Activated T-helper 1 cell treated with anti-CD3 and anti-CD28 coated beads, Interleukin-12 subunit alpha, Interleukin-12 subunit beta, Interleukin-2, Interleukin-4 antibody, amounts not matched to agents 30 ng/mL and 10 ng/mL and 1 ng/mL, durations not matched to agents 14 hours and 24 hours and 36 hours (primary cell): ENCODE measurements at regions of chr1 and their contacts with region 1.

Region 1: DNA sequence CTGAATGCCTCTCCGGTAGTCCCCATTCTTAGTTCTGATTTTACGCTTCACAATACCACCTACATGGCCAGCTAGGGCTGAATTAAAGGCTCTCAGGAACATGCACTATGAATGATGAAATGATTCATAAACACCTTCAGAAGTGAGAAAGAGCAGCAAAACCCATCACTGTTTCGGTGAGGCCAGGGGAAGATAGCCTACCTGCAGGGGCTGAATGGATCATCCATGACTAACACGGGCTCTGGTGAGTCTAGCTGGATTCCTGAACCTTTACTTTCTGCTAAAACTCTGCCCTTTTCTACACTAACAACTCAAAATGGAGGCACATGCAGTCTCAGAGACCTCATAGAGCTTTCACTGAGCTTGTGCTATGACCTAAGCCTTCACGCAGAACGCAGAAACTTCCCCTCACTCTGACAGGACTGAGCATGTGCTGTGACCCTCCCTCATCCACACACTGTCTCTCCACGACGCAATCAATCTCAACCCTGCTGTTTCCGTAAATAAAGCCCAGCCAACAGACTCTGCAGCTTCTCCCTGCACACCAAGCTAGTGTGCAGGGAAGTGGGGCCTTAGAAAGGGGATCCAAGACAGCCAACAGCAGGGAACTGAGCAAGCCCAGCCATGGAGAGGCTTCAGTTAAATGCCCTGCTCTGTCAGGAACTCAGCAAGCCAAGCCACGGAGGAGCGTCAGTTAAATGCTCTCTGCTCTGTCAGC is 207.8 kb downstream of the SLC45A1 start:
- DNase-seq: peak; percentile 69
- H3K4me3 Mint-ChIP-seq: no peak overlapping the region
- H3K27ac Mint-ChIP-seq: no peak overlapping the region
- H3K4me1 Mint-ChIP-seq: peaks cover 20% of the 10 kb centered on the region
- H3K27me3 Mint-ChIP-seq: no peaks in the 10 kb centered on the region

Region 2: DNA sequence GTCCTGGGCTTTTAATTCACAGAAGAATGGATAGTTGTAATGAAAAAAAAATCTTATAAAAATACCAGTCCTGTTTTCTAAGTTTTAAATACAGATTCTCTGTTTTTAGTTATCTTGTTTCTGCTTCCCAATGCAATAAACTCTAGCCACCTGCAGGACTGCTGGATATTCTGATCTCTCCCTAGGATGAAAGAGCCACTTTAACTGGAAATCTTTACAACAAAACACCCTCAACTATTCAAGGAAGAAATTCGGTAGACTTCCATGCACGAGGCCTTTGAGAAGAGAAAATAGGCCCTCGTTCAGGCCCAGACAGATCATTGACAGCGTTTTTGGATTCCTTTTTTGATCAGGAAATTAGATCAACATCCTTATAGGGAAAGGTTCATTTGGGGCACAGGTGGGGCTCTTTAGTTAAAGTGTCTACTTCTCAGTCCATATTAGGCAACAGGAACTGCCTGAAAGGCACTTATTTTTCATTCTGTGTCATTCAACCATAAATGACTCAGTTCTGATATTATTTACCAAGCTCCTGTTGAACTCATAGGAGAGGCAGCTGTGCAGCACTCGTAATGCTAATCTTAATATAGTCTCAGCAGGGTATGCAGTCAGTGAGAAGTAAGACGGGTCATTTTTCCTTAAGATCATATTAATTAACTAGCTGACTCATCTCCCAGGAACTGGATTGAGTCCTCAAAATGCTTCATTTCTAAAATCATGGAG is 428.5 kb before region 1 on chr1:
- intact Hi-C with region 1: loop called (anchors 10 kb)
- DNase-seq: peak; percentile 11
- H3K4me3 Mint-ChIP-seq: peak overlapping the region; percentile 63
- H3K27ac Mint-ChIP-seq: peak overlapping the region; percentile 69
- H3K4me1 Mint-ChIP-seq: peaks cover 37% of the 10 kb centered on the region
- H3K27me3 Mint-ChIP-seq: peaks cover 5% of the 10 kb centered on the region

Region 3: GRCh38 chr1:8423650-8424538 is 101.8 kb before region 1 on chr1:
- intact Hi-C with region 1: loop called (anchors 1 kb)
- DNase-seq: peak; percentile 32
- H3K4me3 Mint-ChIP-seq: peak overlapping the region; percentile 91
- H3K27ac Mint-ChIP-seq: peak overlapping the region; percentile 92
- H3K4me1 Mint-ChIP-seq: peaks cover 44% of the 10 kb centered on the region
- H3K27me3 Mint-ChIP-seq: no peaks in the 10 kb centered on the region

Region 4: GRCh38 chr1:8497210-8497801 is 28.4 kb before region 1 on chr1:
- intact Hi-C with region 1: loop called (anchors 1 kb)
- DNase-seq: no peak
- H3K4me3 Mint-ChIP-seq: no peak overlapping the region
- H3K27ac Mint-ChIP-seq: peak overlapping the region; percentile 67
- H3K4me1 Mint-ChIP-seq: peaks cover 34% of the 10 kb centered on the region
- H3K27me3 Mint-ChIP-seq: no peaks in the 10 kb centered on the region

Region 5: DNA sequence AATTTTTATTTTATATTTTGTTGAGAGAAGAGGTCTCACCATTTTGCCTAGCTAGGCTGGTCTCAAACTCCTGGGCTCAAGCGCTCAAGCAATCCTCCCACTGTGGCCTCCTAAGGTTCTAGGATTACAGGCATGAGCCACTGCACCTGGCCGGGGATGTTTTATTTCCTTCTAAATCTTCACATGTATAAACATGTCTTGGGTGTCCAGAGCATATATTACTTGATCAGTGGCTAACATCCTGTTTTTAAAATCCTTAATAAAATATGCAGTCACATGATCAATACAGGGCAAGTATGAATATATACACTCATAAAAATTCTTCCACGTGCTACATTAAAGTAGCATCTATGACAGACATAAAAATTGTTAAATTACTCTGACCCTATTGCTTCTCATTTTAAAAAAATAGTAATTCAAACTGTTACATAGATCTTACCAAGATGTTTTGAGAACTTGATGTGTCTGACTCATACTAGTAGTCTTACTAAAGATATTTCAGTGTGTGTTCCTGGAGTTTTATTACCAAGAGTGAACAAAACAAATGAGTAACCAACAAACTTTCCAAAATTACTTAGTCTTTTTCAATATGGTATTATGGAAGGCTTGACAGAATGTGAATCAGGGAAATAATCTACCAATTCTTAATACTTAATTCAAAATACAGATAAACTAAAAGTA is 14.7 kb after region 1 on chr1:
- intact Hi-C with region 1: loop called (anchors 1 kb)
- DNase-seq: no peak
- H3K4me3 Mint-ChIP-seq: peak overlapping the region; percentile 65
- H3K27ac Mint-ChIP-seq: peak overlapping the region; percentile 91
- H3K4me1 Mint-ChIP-seq: peaks cover 51% of the 10 kb centered on the region
- H3K27me3 Mint-ChIP-seq: no peaks in the 10 kb centered on the region

Region 6: DNA sequence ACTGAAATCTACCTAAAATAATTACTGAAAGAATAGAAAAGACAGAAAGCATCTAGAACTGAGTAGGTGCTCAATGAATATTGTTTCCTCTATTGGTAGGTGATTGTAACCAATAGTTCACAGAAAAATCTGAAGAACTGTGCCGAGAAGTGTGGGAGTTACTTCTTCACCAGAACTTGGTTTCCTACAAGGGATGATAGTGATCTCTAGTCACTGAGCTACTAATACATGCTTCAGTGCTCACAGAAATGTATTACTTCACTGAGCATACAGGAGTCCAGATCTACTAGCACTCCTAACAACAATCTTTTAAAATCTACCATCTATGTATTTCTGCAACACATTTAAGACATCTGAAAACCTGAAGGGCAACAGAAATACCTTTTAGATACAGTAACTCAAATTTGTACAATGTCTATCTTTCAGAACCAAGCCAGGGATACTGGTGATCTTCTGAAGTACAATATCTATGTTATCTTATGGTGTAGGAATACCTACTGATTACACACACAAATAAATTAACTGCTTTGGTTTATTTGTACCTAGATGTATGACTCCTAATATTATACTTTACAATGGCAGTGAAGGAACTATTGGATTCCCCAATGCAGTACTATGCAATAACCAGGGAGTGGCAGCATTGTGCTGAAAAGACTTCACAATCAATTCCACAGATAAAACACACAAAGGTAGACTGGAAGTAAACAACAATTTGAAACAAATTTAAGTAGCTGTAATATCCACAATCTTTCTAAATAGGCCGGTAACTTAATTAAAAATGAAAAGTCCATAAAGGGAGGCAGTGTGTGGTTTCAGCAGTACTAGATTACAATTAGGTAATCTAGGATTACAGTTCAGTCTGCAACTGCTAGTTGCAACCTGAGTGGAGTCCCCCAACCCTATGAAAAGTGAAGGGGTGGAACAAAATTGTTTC is 35.2 kb after region 1 on chr1:
- intact Hi-C with region 1: loop called (anchors 1 kb)
- DNase-seq: no peak
- H3K4me3 Mint-ChIP-seq: peak overlapping the region; percentile 32
- H3K27ac Mint-ChIP-seq: peak overlapping the region; percentile 78
- H3K4me1 Mint-ChIP-seq: peaks cover 57% of the 10 kb centered on the region
- H3K27me3 Mint-ChIP-seq: no peaks in the 10 kb centered on the region

Region 7: GRCh38 chr1:8702850-8703810 is 177.4 kb after region 1 on chr1:
- intact Hi-C with region 1: loop called (anchors 1 kb)
- DNase-seq: peak; percentile 69
- H3K4me3 Mint-ChIP-seq: peak overlapping the region; percentile 97
- H3K27ac Mint-ChIP-seq: peak overlapping the region; percentile 89
- H3K4me1 Mint-ChIP-seq: peaks cover 58% of the 10 kb centered on the region
- H3K27me3 Mint-ChIP-seq: peaks cover 3% of the 10 kb centered on the region